T-cell (primary cell): ENCODE measurements at regions of chr6 and their contacts with region 1.

Region 1: GRCh38 chr6:21648475-21649130 is 55.1 kb downstream of the SOX4 start:
- DNase-seq: no peak
- ATAC-seq: no peak
- H3K4me3 ChIP-seq: no peak overlapping the region
- H3K4me3 Mint-ChIP-seq: no peak overlapping the region
- H3K27ac ChIP-seq: no peak overlapping the region
- H3K27ac Mint-ChIP-seq: no peak overlapping the region
- H3K4me1 ChIP-seq: no peaks in the 10 kb centered on the region
- H3K4me1 Mint-ChIP-seq: no peaks in the 10 kb centered on the region
- H3K27me3 ChIP-seq: no peaks in the 10 kb centered on the region
- H3K27me3 Mint-ChIP-seq: peaks cover 0 to 7% of the 10 kb centered on the region in 2 donors

Region 2: DNA sequence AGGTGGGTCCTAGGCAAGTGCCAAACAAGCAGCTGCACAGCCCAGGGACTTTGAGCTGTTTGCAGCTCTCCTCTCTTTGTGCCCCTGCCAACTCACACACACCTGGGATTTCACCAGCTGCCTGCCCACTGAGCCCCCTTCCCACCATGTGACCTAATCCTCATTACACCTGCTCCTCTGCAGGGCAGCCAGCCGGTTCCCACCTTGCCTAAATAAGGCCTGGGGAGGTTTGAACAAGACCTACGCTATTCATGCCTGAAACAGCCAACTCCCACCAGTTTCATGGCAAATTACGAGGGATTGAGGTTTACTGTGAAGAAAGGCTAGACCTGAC is 147.6 kb before region 1 on chr6:
- CTCF ChIA-PET with region 1: no interaction called
- POLR2A ChIA-PET with region 1: no interaction called
- DNase-seq: no peak
- ATAC-seq: no peak
- H3K4me3 ChIP-seq: no peak overlapping the region
- H3K4me3 Mint-ChIP-seq: no peak overlapping the region
- H3K27ac ChIP-seq: no peak overlapping the region
- H3K27ac Mint-ChIP-seq: no peak overlapping the region
- H3K4me1 ChIP-seq: no peaks in the 10 kb centered on the region
- H3K4me1 Mint-ChIP-seq: no peaks in the 10 kb centered on the region
- H3K27me3 ChIP-seq: peaks cover 0 to 5% of the 10 kb centered on the region in 2 experiments
- H3K27me3 Mint-ChIP-seq: peaks cover 0 to 3% of the 10 kb centered on the region in 2 donors

Region 3: GRCh38 chr6:21628160-21628559 is 20.4 kb before region 1 on chr6:
- CTCF ChIA-PET with region 1: no interaction called
- POLR2A ChIA-PET with region 1: interaction called in 1 of 2 experiments, 13 read pairs
- DNase-seq: no peak
- ATAC-seq: no peak
- H3K4me3 ChIP-seq: no peak overlapping the region
- H3K4me3 Mint-ChIP-seq: no peak overlapping the region
- H3K27ac ChIP-seq: no peak overlapping the region
- H3K27ac Mint-ChIP-seq: no peak overlapping the region
- H3K4me1 ChIP-seq: no peaks in the 10 kb centered on the region
- H3K4me1 Mint-ChIP-seq: no peaks in the 10 kb centered on the region
- H3K27me3 ChIP-seq: no peaks in the 10 kb centered on the region
- H3K27me3 Mint-ChIP-seq: no peaks in the 10 kb centered on the region

Region 4: GRCh38 chr6:21968411-21968810 is 319.8 kb after region 1 on chr6:
- CTCF ChIA-PET with region 1: no interaction called
- POLR2A ChIA-PET with region 1: interaction called in 1 of 2 experiments, 13 read pairs
- DNase-seq: no peak
- ATAC-seq: no peak
- H3K4me3 ChIP-seq: peak overlapping the region in 1 of 2 donors; percentile 25
- H3K4me3 Mint-ChIP-seq: no peak overlapping the region
- H3K27ac ChIP-seq: no peak overlapping the region
- H3K27ac Mint-ChIP-seq: no peak overlapping the region
- H3K4me1 ChIP-seq: peaks cover 0 to 42% of the 10 kb centered on the region in 2 experiments
- H3K4me1 Mint-ChIP-seq: peaks cover 4 to 15% (median 5%) of the 10 kb centered on the region in 3 donors
- H3K27me3 ChIP-seq: no peaks in the 10 kb centered on the region
- H3K27me3 Mint-ChIP-seq: no peaks in the 10 kb centered on the region